GM10248 (cell line): ENCODE measurements at regions of chr16 and their contacts with region 1.

Region 1: GRCh38 chr16:85491058-85491771 is 121.9 kb upstream of the GSE1 start:
- DNase-seq: peak; percentile 79
- CTCF ChIP-seq: peak; percentile 69

Region 2: GRCh38 chr16:85502357-85502756 is 11.1 kb after region 1 on chr16:
- CTCF ChIA-PET with region 1: interaction called, 12 read pairs
- POLR2A ChIA-PET with region 1: no interaction called
- DNase-seq: no peak
- CTCF ChIP-seq: no peak

Region 3: DNA sequence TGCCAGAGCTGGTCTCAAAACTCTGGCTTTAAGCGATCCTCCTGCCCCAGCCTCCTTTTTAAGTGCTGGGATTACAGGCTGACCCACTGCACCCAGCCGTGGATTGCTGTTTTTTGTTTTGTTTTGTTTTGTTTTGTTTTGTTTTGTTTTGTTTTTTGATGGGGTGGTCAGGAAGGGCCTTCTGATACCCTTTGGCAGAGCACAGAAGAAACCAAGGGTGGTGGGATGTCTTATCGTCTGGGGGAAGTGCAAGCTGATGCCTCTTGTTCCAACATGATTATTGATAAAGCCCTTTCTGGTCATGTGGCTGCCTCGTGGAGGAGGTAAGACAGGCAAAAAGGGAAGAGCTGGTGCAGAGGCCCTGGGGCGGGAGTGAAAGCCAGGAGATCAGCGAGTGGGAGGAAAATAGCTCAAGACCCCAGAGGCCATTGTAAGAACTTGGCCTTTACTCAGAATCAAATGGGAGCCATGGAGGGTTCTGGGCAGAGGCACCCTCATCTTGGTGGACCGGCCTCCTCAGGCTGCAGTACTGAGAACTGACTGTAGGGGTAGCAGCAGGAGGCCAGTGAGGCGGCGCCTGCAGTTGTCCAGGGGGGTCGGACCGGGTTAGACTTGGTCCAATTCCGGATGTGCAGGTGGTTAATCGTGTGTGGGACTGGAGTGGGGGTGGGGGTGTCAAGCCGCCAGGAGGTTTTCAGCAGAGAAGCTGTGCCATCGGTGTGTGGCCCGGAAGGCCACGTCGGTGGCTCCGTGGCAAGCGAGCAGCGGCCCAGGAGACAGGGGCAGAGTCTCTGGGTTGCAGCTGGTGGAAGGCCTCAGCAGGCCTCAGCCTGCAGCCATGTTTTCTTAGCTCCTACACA is 37.5 kb after region 1 on chr16:
- CTCF ChIA-PET with region 1: interaction called, 10 read pairs
- POLR2A ChIA-PET with region 1: no interaction called
- DNase-seq: peak; percentile 62
- CTCF ChIP-seq: peak; percentile 35